Brain microvascular endothelial cell (primary cell): ENCODE measurements at regions of chr1 and their contacts with region 1.

Region 1: DNA sequence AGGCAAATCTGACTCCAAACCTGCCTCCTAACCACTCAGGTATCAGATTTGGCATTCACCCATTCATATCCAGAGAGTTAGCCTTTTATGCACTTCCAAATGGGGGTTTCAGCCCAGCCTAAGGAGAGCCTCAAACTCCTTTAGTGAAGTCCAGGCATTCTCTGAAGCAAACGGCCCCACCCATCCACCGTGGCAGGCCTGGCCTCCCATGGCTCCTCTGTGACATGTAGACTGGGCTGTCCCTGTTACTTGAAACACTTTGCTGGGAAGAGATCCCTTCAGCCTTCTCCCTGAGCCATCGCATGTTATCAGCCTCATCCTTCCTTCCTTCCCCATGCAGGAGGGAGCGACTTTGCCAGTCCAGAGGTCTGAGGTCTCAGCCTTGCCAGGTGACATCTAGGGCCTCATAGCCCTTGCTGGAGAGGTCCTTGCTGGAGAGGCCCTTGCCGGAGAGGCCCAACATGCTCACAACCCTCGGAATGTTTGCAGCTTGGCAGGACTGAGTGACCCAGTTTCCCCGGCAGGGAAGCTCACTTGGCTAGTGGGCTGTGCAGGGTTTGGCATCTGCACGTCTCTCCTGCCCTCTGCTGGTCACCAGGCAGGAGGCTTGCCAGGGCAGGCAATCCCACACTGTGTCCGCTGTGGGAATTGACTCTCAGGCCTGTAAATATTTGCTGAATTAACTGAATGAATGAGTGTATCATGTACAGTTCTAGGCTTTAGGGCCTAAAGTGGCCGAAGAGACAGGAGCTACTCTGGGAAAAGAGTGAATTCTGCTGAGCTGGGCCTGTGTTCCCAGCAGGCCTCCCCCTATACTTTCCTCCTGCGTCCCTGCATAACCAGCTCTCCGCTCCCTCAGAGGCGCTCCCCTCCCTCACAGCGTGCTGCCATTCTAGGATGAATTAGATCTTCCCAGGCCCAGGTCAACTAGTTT is 26.7 kb upstream of the RBM15 start:
- DNase-seq: peak; percentile 65
- H3K4me3 ChIP-seq: no peak overlapping the region
- H3K27ac ChIP-seq: no peak overlapping the region
- H3K27me3 ChIP-seq: no peaks in the 10 kb centered on the region
- CTCF ChIP-seq: peak; percentile 99

Region 2: GRCh38 chr1:110118636-110119615 is 193.5 kb before region 1 on chr1:
- in situ Hi-C with region 1: no loop called
- DNase-seq: no peak
- H3K4me3 ChIP-seq: no peak overlapping the region
- H3K27ac ChIP-seq: no peak overlapping the region
- H3K27me3 ChIP-seq: no peaks in the 10 kb centered on the region
- CTCF ChIP-seq: no peak

Region 3: DNA sequence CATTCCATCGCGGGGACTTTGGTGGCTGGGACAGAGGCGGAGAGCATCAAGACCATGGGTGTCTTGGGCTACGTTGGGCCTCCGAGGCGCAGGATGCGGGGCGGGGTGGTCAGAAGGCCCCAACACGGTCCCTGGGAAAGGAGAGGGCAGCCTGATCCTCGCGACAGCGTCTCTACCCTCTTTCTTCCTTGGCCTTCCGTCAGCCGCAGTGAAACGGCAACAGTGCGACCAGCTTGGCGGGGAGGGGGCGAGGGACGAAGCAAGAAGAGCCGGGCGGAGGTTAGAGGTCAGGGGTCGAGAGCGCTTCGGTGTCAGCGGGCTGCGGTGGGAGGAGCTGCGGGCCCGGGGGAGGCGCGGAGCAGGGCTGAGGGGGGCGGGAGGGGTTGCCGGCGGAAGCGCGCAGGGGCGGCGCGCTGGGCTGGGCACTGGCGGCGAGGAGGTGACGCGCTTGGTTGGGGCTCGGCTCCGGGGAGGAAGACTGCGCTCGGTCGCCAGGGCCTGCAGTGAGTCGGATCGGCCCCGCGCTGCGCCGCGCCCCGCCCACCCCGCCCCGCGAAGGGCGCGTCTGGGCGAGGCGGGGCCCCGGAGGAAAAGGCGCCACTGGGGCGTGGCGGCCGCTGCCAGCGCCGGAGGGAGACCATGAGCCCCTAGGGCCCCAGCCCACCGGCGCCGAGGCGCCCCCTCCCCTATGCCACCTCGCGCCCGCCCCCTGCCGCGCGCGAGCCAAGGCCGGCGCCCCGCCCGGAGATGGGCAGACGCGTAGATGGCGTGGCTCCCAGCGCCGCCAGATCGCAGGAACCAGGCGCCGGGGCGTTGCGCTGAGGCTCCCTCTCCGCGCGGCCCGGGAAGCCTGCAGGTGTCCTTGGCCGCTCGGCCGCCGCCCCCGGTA is 102.5 kb before region 1 on chr1 and contains the start of gene KCNC4:
- in situ Hi-C with region 1: loop called (anchors 25 kb)
- DNase-seq: peak; percentile 25
- H3K4me3 ChIP-seq: peak within 1 kb of the TSS; percentile 52
- H3K27ac ChIP-seq: no peak within 1 kb of the TSS
- H3K27me3 ChIP-seq: peaks cover 33% of the 10 kb centered on the region
- CTCF ChIP-seq: no peak